ENCODE measurements at regions of chr4 and their contacts with region 1.

Region 1: GRCh38 chr4:42151568-42152506 is 618 bp downstream of the BEND4 start:
- DNase-seq: peak; percentile 88
- ATAC-seq: peak; percentile 71
- H3K4me3 ChIP-seq: peak overlapping the region in 4 of 5 experiments; percentile 68 to 82 (median 78)
- H3K4me3 Mint-ChIP-seq: peak overlapping the region; percentile 92
- H3K27ac ChIP-seq: peak overlapping the region in 1 of 2 donors; percentile 75
- H3K27ac Mint-ChIP-seq: peak overlapping the region; percentile 89
- H3K4me1 ChIP-seq: peaks cover 15 to 22% of the 10 kb centered on the region in 2 donors
- H3K4me1 Mint-ChIP-seq: peaks cover 35% of the 10 kb centered on the region
- H3K27me3 ChIP-seq: peaks cover 0 to 10% (median 0%) of the 10 kb centered on the region in 4 experiments
- H3K27me3 Mint-ChIP-seq: no peaks in the 10 kb centered on the region
- CTCF ChIP-seq: no peak

Region 2: GRCh38 chr4:41990365-41991111 is 161.3 kb before region 1 on chr4 and contains the start of gene SLC30A9:
- CTCF ChIA-PET with region 1: no interaction called
- POLR2A ChIA-PET with region 1: no interaction called
- intact Hi-C with region 1: loop called (anchors 1 kb)
- DNase-seq: peak; percentile 97
- ATAC-seq: peak; percentile 92
- H3K4me3 ChIP-seq: peak within 1 kb of the TSS; percentile 58 to 96 (median 88)
- H3K4me3 Mint-ChIP-seq: peak within 1 kb of the TSS; percentile 100
- H3K27ac ChIP-seq: peak within 1 kb of the TSS; percentile 84 to 92
- H3K27ac Mint-ChIP-seq: peak within 1 kb of the TSS; percentile 96
- H3K4me1 ChIP-seq: peaks cover 14 to 20% of the 10 kb centered on the region in 2 donors
- H3K4me1 Mint-ChIP-seq: peaks cover 23% of the 10 kb centered on the region
- H3K27me3 ChIP-seq: no peaks in the 10 kb centered on the region
- H3K27me3 Mint-ChIP-seq: no peaks in the 10 kb centered on the region
- CTCF ChIP-seq: peak; percentile 48
- total RNA-seq, gene SLC30A9: 35.2 and 37.0 TPM in 2 replicates

Region 3: GRCh38 chr4:42167709-42168108 is 15.9 kb after region 1 on chr4:
- CTCF ChIA-PET with region 1: interaction called, 6 read pairs
- POLR2A ChIA-PET with region 1: no interaction called
- intact Hi-C with region 1: loop called (anchors 1 kb)
- DNase-seq: peak; percentile 51
- ATAC-seq: peak; percentile 84
- H3K4me3 ChIP-seq: no peak overlapping the region
- H3K4me3 Mint-ChIP-seq: peak overlapping the region; percentile 59
- H3K27ac ChIP-seq: peak overlapping the region in 1 of 2 donors; percentile 7
- H3K27ac Mint-ChIP-seq: no peak overlapping the region
- H3K4me1 ChIP-seq: peaks cover 9% of the 10 kb centered on the region in 2 donors
- H3K4me1 Mint-ChIP-seq: peaks cover 13% of the 10 kb centered on the region
- H3K27me3 ChIP-seq: no peaks in the 10 kb centered on the region
- H3K27me3 Mint-ChIP-seq: no peaks in the 10 kb centered on the region
- CTCF ChIP-seq: no peak

Region 4: GRCh38 chr4:42248984-42249383 is 97.1 kb after region 1 on chr4:
- CTCF ChIA-PET with region 1: no interaction called
- POLR2A ChIA-PET with region 1: no interaction called
- intact Hi-C with region 1: no loop called
- DNase-seq: no peak
- ATAC-seq: no peak
- H3K4me3 ChIP-seq: no peak overlapping the region
- H3K4me3 Mint-ChIP-seq: no peak overlapping the region
- H3K27ac ChIP-seq: no peak overlapping the region
- H3K27ac Mint-ChIP-seq: no peak overlapping the region
- H3K4me1 ChIP-seq: no peaks in the 10 kb centered on the region
- H3K4me1 Mint-ChIP-seq: no peaks in the 10 kb centered on the region
- H3K27me3 ChIP-seq: peaks cover 0 to 3% (median 0%) of the 10 kb centered on the region in 4 experiments
- H3K27me3 Mint-ChIP-seq: peaks cover 11% of the 10 kb centered on the region
- CTCF ChIP-seq: no peak

Region 5: DNA sequence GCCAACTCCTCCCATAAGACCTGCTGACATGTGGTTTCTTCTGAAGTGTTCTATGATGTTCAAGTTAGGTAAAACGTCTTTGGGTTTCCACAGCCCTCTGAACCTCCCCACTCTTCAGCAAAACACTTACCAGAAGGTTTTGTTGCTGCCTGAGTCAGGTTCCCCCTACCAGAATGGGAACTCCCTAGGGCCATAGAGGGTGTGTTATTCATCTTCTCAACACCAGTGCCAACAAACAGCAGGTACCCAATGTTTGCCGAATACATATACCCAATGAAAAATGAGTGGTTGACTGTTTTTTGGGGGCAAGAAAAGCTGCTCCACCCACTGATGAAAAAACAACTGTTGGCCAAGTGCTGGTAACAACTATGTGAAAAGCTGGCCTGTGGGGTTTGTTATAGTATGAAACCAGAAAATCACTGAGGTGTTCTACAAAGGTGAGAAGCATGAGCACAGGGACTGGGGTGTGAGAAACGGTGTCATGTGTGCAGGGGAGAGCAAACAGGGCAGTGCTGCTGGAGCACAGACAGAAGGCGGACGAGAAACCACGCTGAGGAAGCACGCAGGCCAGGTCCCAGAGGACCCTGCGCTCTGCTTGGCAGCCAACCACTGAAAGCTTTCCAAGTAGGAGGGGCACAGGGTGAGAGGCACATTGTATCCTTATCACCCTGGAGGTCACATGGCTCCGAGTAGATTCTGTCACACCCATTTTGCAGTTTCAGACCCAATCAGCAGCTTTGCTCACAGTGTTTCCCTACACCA is 476.2 kb after region 1 on chr4:
- CTCF ChIA-PET with region 1: no interaction called
- POLR2A ChIA-PET with region 1: no interaction called
- intact Hi-C with region 1: loop called (anchors 5 kb)
- DNase-seq: peak; percentile 88
- ATAC-seq: peak; percentile 87
- H3K4me3 ChIP-seq: peak overlapping the region in 3 of 5 experiments; percentile 5 to 23 (median 15)
- H3K4me3 Mint-ChIP-seq: peak overlapping the region; percentile 84
- H3K27ac ChIP-seq: peak overlapping the region; percentile 78 to 79
- H3K27ac Mint-ChIP-seq: peak overlapping the region; percentile 97
- H3K4me1 ChIP-seq: peaks cover 69 to 81% of the 10 kb centered on the region in 2 donors
- H3K4me1 Mint-ChIP-seq: peaks cover 78% of the 10 kb centered on the region
- H3K27me3 ChIP-seq: no peaks in the 10 kb centered on the region
- H3K27me3 Mint-ChIP-seq: no peaks in the 10 kb centered on the region
- CTCF ChIP-seq: no peak